GM10248 (cell line): ENCODE measurements at regions of chr12 and their contacts with region 1.

Region 1: DNA sequence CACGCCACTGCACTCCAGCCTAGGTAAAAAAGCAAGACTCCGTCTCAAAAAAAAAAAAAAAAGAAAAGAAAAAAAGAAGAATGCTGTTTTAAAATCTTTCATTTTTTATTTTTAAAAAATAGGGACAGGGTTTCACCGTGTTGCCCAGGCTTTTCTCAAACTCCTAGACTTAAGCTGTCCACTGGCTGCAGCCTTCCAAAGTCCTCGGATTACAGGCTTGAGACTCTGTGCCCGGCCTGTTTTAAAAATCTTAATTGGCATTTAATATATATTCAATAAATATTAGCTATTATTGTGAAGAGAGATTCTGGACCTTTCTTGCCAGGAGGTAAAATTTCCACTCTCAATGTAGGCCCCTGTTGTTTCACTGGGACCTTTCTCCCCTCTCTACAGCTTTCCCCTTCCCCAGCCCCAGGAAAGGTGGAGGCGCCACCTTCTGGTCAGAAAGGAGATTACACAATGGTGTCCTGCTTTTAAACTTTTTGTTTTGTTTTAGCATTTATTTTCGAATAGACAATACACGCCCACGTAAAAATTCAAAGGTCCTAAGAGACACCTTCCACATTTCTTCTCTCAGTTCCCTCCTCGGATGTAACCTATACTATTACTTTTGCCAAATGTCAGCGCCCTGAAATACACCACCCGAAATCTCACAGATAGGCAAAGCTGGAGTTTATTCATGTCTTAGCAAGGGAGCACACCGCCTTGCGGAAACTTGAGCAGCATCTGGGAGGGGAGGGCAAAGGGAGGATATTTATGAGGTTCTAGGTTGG is 23.8 kb upstream of the PHC1 start:
- DNase-seq: peak; percentile 73
- CTCF ChIP-seq: peak; percentile 85

Region 2: GRCh38 chr12:8662593-8662992 is 227.9 kb before region 1 on chr12 and contains the start of gene MFAP5:
- CTCF ChIA-PET with region 1: interaction called, 21 read pairs
- POLR2A ChIA-PET with region 1: no interaction called
- DNase-seq: no peak
- CTCF ChIP-seq: no peak

Region 3: DNA sequence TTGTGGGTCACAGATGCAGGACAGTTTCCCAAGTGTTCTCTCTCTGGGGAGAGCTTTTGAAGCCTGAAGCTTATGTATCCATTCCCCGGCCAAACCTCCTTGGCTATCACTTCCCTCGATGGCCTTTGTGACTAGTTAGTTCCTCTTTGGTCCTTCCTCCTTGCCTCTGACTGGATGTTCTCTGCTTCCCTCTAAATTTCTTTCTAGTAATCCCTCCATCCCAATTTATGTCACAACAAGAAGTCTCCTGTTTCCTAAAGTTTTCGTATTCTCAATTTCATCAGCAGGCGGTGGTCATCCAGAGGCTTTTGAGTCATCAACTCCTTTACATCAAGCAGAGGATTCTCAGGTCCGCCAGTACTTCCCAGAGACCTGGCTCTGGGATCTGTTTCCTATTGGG is 40.6 kb before region 1 on chr12:
- CTCF ChIA-PET with region 1: interaction called, 10 read pairs
- POLR2A ChIA-PET with region 1: no interaction called
- DNase-seq: no peak
- CTCF ChIP-seq: no peak

Region 4: GRCh38 chr12:8905546-8905945 is 15.0 kb after region 1 on chr12:
- CTCF ChIA-PET with region 1: interaction called, 23 read pairs
- POLR2A ChIA-PET with region 1: no interaction called
- DNase-seq: no peak
- CTCF ChIP-seq: no peak